Endothelial cell of umbilical vein (primary cell): ENCODE measurements at regions of chr14 and their contacts with region 1.

Region 1: DNA sequence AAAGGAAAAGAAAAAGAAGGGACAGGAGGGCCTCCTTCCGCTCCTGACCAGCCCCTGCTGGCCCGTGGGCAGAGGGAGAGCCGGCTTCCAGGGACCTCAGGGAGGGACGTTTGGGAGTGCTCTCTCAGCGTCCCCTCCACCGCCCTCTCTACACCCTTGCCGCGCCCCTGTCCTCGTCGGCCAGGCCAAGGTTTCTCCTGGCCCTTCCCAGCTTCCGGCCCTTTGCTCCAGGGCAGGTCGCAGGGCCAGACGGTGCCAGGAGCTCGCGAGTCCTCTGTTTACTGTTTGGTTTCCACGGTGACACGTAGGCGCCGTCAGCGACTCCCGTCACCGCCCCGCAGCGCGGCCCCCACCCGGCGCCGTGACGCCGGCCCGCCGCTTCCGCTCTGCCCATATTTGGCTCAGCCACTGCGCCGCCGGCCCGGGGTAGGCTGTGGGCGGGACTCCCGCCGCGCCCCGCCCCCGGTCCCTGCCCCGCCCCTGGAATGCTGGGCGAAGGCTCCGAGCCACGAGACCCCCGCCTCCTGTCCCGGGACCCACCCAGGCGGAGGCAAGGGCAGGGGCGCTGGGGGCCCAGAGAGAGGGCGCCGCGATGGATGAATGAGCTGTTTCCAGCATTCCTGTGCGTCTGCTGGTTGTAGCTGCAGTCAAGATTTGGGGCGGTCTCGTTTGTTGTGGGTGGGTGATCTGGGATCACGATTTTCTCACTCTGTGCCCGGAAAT is 15.5 kb downstream of the FOS start:
- DNase-seq: peak; percentile 96
- H3K4me3 ChIP-seq: peak overlapping the region; percentile 34 to 78 (median 55)
- H3K27ac ChIP-seq: peak overlapping the region; percentile 88
- H3K4me1 ChIP-seq: peaks cover 16% of the 10 kb centered on the region
- H3K27me3 ChIP-seq: peaks cover 0 to 10% of the 10 kb centered on the region in 2 experiments
- CTCF ChIP-seq: no peak
- POLR2A ChIP-seq: no peak

Region 2: GRCh38 chr14:75126679-75127473 is 167.2 kb before region 1 on chr14 and contains the start of gene NEK9:
- CTCF ChIA-PET with region 1: interaction called, 77 read pairs
- POLR2A ChIA-PET with region 1: interaction called, 4 read pairs
- dilution Hi-C with region 1: loop called (anchors 25 kb)
- intact Hi-C with region 1: loop called (anchors 1 kb)
- DNase-seq: peak; percentile 89
- H3K4me3 ChIP-seq: peak within 1 kb of the TSS; percentile 36 to 69 (median 62)
- H3K27ac ChIP-seq: peak within 1 kb of the TSS; percentile 95
- H3K4me1 ChIP-seq: peaks cover 45% of the 10 kb centered on the region
- H3K27me3 ChIP-seq: no peaks in the 10 kb centered on the region
- CTCF ChIP-seq: no peak
- POLR2A ChIP-seq: peak; percentile 93
- total RNA-seq, gene NEK9: 65.1 and 69.6 TPM in 2 replicates

Region 3: DNA sequence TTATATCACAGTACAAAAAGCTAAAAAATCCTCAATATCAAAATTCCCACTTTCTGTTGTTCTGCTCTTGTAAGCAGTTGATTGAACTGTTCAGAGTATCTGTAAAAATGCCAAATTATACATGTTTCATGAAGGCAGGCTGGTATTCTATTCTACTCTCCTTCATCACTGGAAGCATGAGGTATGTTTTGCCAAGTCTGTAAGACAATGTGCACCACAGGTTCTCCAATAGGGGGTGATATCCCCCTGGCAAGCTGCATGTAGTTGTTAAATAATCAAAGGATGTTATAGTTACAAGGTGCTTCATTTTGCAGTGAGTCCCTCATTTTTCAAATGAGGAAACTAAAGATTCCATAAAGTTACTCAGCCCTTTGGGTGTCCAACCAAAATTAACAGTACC is 152.1 kb before region 1 on chr14:
- CTCF ChIA-PET with region 1: interaction called, 175 read pairs
- POLR2A ChIA-PET with region 1: no interaction called
- dilution Hi-C with region 1: loop called (anchors 25 kb)
- intact Hi-C with region 1: loop called (anchors 1 kb)
- DNase-seq: peak; percentile 67
- H3K4me3 ChIP-seq: no peak overlapping the region
- H3K27ac ChIP-seq: no peak overlapping the region
- H3K4me1 ChIP-seq: no peaks in the 10 kb centered on the region
- H3K27me3 ChIP-seq: no peaks in the 10 kb centered on the region
- CTCF ChIP-seq: peak; percentile 55 to 62
- POLR2A ChIP-seq: no peak

Region 4: DNA sequence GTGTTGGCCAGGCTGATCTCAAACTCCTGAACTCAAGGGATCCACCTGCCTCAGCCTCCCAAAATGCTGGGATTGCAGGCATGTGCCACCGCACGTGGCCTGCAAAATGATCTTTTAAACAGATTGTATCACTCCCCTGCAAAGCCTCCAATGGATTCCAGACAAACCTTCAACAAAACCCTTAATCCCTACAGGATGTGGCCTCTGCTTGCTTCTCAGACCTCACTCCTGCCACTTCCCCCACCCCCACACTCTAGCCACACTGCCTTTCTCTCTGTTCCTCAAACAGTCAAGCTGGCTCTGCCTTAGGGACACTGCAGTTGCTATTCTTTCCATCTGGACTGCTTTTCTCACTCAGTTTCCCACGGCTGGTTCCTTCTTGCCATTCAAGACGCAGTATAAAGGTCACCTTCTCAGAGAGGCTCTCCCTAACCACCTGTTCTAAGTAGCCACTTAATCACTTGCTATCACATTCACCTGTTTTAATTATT is 70.4 kb before region 1 on chr14:
- CTCF ChIA-PET with region 1: no interaction called
- POLR2A ChIA-PET with region 1: no interaction called
- dilution Hi-C with region 1: no loop called
- intact Hi-C with region 1: loop called (anchors 1 kb)
- DNase-seq: no peak
- H3K4me3 ChIP-seq: no peak overlapping the region
- H3K27ac ChIP-seq: no peak overlapping the region
- H3K4me1 ChIP-seq: peaks cover 13% of the 10 kb centered on the region
- H3K27me3 ChIP-seq: no peaks in the 10 kb centered on the region
- CTCF ChIP-seq: no peak
- POLR2A ChIP-seq: no peak

Region 5: DNA sequence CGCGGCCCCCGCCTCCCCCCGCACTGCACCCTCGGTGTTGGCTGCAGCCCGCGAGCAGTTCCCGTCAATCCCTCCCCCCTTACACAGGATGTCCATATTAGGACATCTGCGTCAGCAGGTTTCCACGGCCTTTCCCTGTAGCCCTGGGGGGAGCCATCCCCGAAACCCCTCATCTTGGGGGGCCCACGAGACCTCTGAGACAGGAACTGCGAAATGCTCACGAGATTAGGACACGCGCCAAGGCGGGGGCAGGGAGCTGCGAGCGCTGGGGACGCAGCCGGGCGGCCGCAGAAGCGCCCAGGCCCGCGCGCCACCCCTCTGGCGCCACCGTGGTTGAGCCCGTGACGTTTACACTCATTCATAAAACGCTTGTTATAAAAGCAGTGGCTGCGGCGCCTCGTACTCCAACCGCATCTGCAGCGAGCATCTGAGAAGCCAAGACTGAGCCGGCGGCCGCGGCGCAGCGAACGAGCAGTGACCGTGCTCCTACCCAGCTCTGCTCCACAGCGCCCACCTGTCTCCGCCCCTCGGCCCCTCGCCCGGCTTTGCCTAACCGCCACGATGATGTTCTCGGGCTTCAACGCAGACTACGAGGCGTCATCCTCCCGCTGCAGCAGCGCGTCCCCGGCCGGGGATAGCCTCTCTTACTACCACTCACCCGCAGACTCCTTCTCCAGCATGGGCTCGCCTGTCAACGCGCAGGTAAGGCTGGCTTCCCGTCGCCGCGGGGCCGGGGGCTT is 15.5 kb before region 1 on chr14 and contains the start of gene FOS:
- CTCF ChIA-PET with region 1: interaction called, 24 read pairs
- POLR2A ChIA-PET with region 1: interaction called, 10 read pairs
- dilution Hi-C with region 1: no loop called
- intact Hi-C with region 1: loop called (anchors 1 kb)
- DNase-seq: peak; percentile 93
- H3K4me3 ChIP-seq: peak within 1 kb of the TSS; percentile 31 to 85 (median 68)
- H3K27ac ChIP-seq: peak within 1 kb of the TSS; percentile 92
- H3K4me1 ChIP-seq: peaks cover 11% of the 10 kb centered on the region
- H3K27me3 ChIP-seq: no peaks in the 10 kb centered on the region
- CTCF ChIP-seq: no peak
- POLR2A ChIP-seq: peak; percentile 98
- total RNA-seq, gene FOS: 9.2 and 63.2 TPM in 2 replicates

Region 6: GRCh38 chr14:75333606-75334548 is 39.8 kb after region 1 on chr14:
- CTCF ChIA-PET with region 1: no interaction called
- POLR2A ChIA-PET with region 1: no interaction called
- dilution Hi-C with region 1: no loop called
- intact Hi-C with region 1: no loop called
- DNase-seq: no peak
- H3K4me3 ChIP-seq: no peak overlapping the region
- H3K27ac ChIP-seq: no peak overlapping the region
- H3K4me1 ChIP-seq: no peaks in the 10 kb centered on the region
- H3K27me3 ChIP-seq: peaks cover 4 to 5% of the 10 kb centered on the region in 2 experiments
- CTCF ChIP-seq: no peak
- POLR2A ChIP-seq: no peak

Region 7: GRCh38 chr14:75514673-75515628 is 220.9 kb after region 1 on chr14:
- CTCF ChIA-PET with region 1: no interaction called
- POLR2A ChIA-PET with region 1: no interaction called
- dilution Hi-C with region 1: no loop called
- intact Hi-C with region 1: no loop called
- DNase-seq: peak; percentile 17
- H3K4me3 ChIP-seq: peak overlapping the region in 2 of 3 experiments; percentile 28 to 29
- H3K27ac ChIP-seq: no peak overlapping the region
- H3K4me1 ChIP-seq: no peaks in the 10 kb centered on the region
- H3K27me3 ChIP-seq: no peaks in the 10 kb centered on the region
- CTCF ChIP-seq: peak in 1 of 2 donors; percentile 19
- POLR2A ChIP-seq: no peak